ENCODE measurements at regions of chr2 and their contacts with region 1.

Region 1: GRCh38 chr2:85635636-85636035 is 19.6 kb downstream of the USP39 start:
- DNase-seq: no peak
- ATAC-seq: no peak
- H3K4me3 ChIP-seq: no peak overlapping the region
- H3K4me3 Mint-ChIP-seq: no peak overlapping the region
- H3K27ac ChIP-seq: no peak overlapping the region
- H3K27ac Mint-ChIP-seq: peak overlapping the region; percentile 6
- H3K4me1 ChIP-seq: no peaks in the 10 kb centered on the region
- H3K4me1 Mint-ChIP-seq: peaks cover 21% of the 10 kb centered on the region
- H3K27me3 ChIP-seq: no peaks in the 10 kb centered on the region
- H3K27me3 Mint-ChIP-seq: no peaks in the 10 kb centered on the region
- CTCF ChIP-seq: no peak

Region 2: DNA sequence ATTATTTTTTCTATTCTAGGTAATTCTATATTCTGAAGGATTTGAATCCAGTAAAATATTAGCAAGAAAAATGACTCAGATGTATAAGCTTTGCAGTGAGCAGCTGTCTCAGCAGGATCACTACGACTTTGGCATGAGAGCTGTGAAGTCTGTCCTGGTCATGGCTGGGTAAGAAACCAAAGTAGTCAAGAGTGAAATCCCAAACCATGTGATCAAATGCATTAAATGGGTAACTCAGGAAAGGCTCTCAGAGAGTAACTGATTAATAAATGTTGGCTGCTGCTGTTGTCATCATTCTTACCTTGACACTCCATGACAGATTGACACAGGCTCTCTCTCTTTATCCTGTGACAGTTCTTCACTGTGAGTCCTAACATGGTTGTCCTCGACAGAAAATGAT is 995.2 kb before region 1 on chr2:
- CTCF ChIA-PET with region 1: no interaction called
- POLR2A ChIA-PET with region 1: no interaction called
- intact Hi-C with region 1: no loop called
- DNase-seq: no peak
- ATAC-seq: no peak
- H3K4me3 ChIP-seq: no peak overlapping the region
- H3K4me3 Mint-ChIP-seq: no peak overlapping the region
- H3K27ac ChIP-seq: no peak overlapping the region
- H3K27ac Mint-ChIP-seq: no peak overlapping the region
- H3K4me1 ChIP-seq: peaks cover 4% of the 10 kb centered on the region
- H3K4me1 Mint-ChIP-seq: peaks cover 27% of the 10 kb centered on the region
- H3K27me3 ChIP-seq: no peaks in the 10 kb centered on the region
- H3K27me3 Mint-ChIP-seq: no peaks in the 10 kb centered on the region
- CTCF ChIP-seq: no peak

Region 3: GRCh38 chr2:85475799-85476490 is 159.7 kb before region 1 on chr2:
- CTCF ChIA-PET with region 1: no interaction called
- POLR2A ChIA-PET with region 1: no interaction called
- intact Hi-C with region 1: no loop called
- DNase-seq: no peak
- ATAC-seq: no peak
- H3K4me3 ChIP-seq: no peak overlapping the region
- H3K4me3 Mint-ChIP-seq: no peak overlapping the region
- H3K27ac ChIP-seq: no peak overlapping the region
- H3K27ac Mint-ChIP-seq: no peak overlapping the region
- H3K4me1 ChIP-seq: no peaks in the 10 kb centered on the region
- H3K4me1 Mint-ChIP-seq: no peaks in the 10 kb centered on the region
- H3K27me3 ChIP-seq: no peaks in the 10 kb centered on the region
- H3K27me3 Mint-ChIP-seq: no peaks in the 10 kb centered on the region
- CTCF ChIP-seq: no peak

Region 4: GRCh38 chr2:85648619-85649018 is 13.0 kb after region 1 on chr2:
- CTCF ChIA-PET with region 1: interaction called, 37 read pairs
- POLR2A ChIA-PET with region 1: no interaction called
- intact Hi-C with region 1: no loop called
- DNase-seq: no peak
- ATAC-seq: no peak
- H3K4me3 ChIP-seq: no peak overlapping the region
- H3K4me3 Mint-ChIP-seq: no peak overlapping the region
- H3K27ac ChIP-seq: no peak overlapping the region
- H3K27ac Mint-ChIP-seq: no peak overlapping the region
- H3K4me1 ChIP-seq: no peaks in the 10 kb centered on the region
- H3K4me1 Mint-ChIP-seq: no peaks in the 10 kb centered on the region
- H3K27me3 ChIP-seq: no peaks in the 10 kb centered on the region
- H3K27me3 Mint-ChIP-seq: no peaks in the 10 kb centered on the region
- CTCF ChIP-seq: no peak

Region 5: DNA sequence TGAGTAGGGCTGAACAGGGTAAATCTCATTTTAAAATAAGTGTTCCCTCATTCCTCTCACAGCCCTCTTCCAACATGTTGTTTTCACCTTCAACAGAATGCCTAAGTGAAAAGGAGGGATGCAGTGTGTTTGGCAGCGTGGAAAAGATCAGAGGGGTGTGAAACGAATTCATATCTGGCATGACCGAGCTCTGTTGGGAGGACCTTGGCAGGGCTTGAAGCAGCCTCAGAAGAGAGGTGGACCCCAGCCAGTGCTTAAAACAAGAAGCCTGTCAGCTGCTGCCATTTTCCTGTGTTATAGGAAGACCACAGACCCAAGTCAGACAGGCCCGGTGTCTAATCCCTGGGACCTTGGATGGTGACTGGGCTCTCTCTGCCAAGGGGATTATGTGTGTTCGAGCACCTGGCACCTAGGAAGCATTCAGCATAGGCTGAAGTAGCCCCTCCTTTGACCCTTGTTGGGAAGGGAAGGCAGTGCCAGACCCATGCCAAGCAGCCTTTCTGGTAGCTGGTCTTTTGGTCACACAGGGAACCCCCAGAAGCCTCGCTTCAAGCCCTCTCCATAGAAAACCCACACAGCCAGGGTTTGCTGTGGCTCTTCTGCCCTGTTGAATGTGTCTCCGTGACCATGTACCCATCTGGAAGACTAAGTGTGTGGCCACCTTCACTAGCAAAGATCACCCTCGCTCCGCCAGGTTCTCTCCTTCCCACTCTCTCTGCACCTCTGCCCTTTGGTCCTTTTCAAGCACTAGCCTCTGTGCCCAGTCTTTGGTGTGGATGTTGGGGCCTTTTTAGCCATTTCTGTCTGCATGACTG is 340.7 kb after region 1 on chr2:
- CTCF ChIA-PET with region 1: no interaction called
- POLR2A ChIA-PET with region 1: no interaction called
- intact Hi-C with region 1: no loop called
- DNase-seq: peak in 1 of 9 experiments; percentile 27
- ATAC-seq: no peak
- H3K4me3 ChIP-seq: no peak overlapping the region
- H3K4me3 Mint-ChIP-seq: no peak overlapping the region
- H3K27ac ChIP-seq: no peak overlapping the region
- H3K27ac Mint-ChIP-seq: no peak overlapping the region
- H3K4me1 ChIP-seq: no peaks in the 10 kb centered on the region
- H3K4me1 Mint-ChIP-seq: no peaks in the 10 kb centered on the region
- H3K27me3 ChIP-seq: no peaks in the 10 kb centered on the region
- H3K27me3 Mint-ChIP-seq: no peaks in the 10 kb centered on the region
- CTCF ChIP-seq: no peak

Region 6: GRCh38 chr2:86314125-86314524 is 678.5 kb after region 1 on chr2:
- CTCF ChIA-PET with region 1: no interaction called
- POLR2A ChIA-PET with region 1: no interaction called
- intact Hi-C with region 1: no loop called
- DNase-seq: no peak
- ATAC-seq: no peak
- H3K4me3 ChIP-seq: no peak overlapping the region
- H3K4me3 Mint-ChIP-seq: no peak overlapping the region
- H3K27ac ChIP-seq: no peak overlapping the region
- H3K27ac Mint-ChIP-seq: no peak overlapping the region
- H3K4me1 ChIP-seq: no peaks in the 10 kb centered on the region
- H3K4me1 Mint-ChIP-seq: peaks cover 3% of the 10 kb centered on the region
- H3K27me3 ChIP-seq: no peaks in the 10 kb centered on the region
- H3K27me3 Mint-ChIP-seq: peaks cover 5% of the 10 kb centered on the region
- CTCF ChIP-seq: no peak

Measured in CD8-positive, alpha-beta T cell (primary cell).